Gastrocnemius medialis (tissue), 4 donors: ENCODE measurements at regions of chr12 and their contacts with region 1.

Region 1: GRCh38 chr12:61272361-61272760 is 987.8 kb upstream of the USP15 start:
- DNase-seq: no peak
- ATAC-seq: no peak
- H3K4me3 ChIP-seq: no peak overlapping the region
- H3K27ac ChIP-seq: no peak overlapping the region
- H3K4me1 ChIP-seq: no peaks in the 10 kb centered on the region
- H3K27me3 ChIP-seq: no peaks in the 10 kb centered on the region
- CTCF ChIP-seq: no peak
- POLR2A ChIP-seq: no peak

Region 2: DNA sequence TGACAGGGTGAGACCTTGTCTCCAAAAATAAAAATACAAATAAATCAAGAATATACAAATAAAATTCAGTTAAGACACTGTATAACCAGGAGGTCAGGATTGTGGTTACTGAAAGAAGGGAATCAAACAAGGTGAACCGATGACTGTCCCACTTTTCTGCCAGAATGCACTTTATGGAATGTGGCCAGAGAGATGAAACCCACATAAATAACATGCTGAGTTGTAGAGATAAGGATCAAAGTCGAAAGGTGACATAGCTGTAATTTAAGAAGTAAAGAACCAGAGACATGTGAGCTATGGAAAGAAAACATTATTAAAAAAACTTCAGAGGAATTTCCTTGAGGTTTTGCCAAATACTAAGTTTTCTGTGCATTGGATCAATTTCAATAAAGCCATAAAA is 110.4 kb before region 1 on chr12:
- in situ Hi-C with region 1: loop called in 1 of 4 experiments (anchors 25 kb)
- intact Hi-C with region 1: no loop called
- DNase-seq: no peak
- ATAC-seq: no peak
- H3K4me3 ChIP-seq: no peak overlapping the region
- H3K27ac ChIP-seq: no peak overlapping the region
- H3K4me1 ChIP-seq: no peaks in the 10 kb centered on the region
- H3K27me3 ChIP-seq: no peaks in the 10 kb centered on the region
- CTCF ChIP-seq: no peak
- POLR2A ChIP-seq: no peak

Region 3: DNA sequence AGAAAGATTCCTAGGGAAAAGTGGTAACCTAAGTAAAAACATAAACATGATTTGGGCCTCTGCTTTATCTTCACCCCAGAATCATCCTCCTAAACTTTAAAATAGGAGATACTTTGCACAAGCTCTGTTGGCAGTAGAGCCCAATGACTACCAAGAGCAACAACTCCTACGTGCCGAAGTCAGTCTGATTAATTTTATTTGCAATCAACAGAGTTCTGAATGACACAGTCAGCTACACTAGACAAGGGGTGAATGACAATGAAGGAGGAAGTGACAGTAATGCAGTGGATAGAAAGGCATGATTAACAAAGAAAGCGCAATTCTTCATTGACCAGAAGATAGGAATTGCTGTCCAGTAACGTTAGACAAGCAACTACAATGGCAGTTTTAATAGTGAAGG is 29.9 kb after region 1 on chr12:
- in situ Hi-C with region 1: no loop called
- intact Hi-C with region 1: no loop called
- DNase-seq: no peak
- ATAC-seq: no peak
- H3K4me3 ChIP-seq: no peak overlapping the region
- H3K27ac ChIP-seq: no peak overlapping the region
- H3K4me1 ChIP-seq: no peaks in the 10 kb centered on the region
- H3K27me3 ChIP-seq: no peaks in the 10 kb centered on the region
- CTCF ChIP-seq: no peak
- POLR2A ChIP-seq: no peak

Region 4: GRCh38 chr12:61356440-61357030 is 84.2 kb after region 1 on chr12:
- in situ Hi-C with region 1: no loop called
- intact Hi-C with region 1: no loop called
- DNase-seq: no peak
- ATAC-seq: no peak
- H3K4me3 ChIP-seq: no peak overlapping the region
- H3K27ac ChIP-seq: no peak overlapping the region
- H3K4me1 ChIP-seq: no peaks in the 10 kb centered on the region
- H3K27me3 ChIP-seq: no peaks in the 10 kb centered on the region
- CTCF ChIP-seq: no peak
- POLR2A ChIP-seq: no peak

Region 5: DNA sequence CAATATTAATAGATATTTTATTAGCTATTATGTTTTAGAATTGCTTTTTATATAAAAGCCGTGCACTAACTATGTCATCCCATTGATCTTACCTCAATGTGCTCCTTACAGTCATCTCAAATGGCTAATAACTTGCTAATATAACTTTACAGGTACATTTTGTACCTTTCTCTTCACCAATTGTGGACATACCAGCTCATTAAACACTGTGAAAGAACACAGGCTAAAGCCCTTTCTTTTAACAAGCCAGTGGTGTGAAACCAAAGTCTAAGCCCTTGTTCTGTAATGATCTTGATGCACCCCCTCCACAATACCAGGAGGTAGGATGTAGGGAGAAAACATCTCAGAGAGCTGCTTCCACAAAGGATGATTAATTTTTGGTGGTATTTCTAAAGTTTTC is 312.6 kb after region 1 on chr12:
- in situ Hi-C with region 1: no loop called
- intact Hi-C with region 1: no loop called
- DNase-seq: no peak
- ATAC-seq: no peak
- H3K4me3 ChIP-seq: no peak overlapping the region
- H3K27ac ChIP-seq: no peak overlapping the region
- H3K4me1 ChIP-seq: no peaks in the 10 kb centered on the region
- H3K27me3 ChIP-seq: no peaks in the 10 kb centered on the region
- CTCF ChIP-seq: no peak
- POLR2A ChIP-seq: no peak